MCF 10A (cell line): ENCODE measurements at regions of chr6 and their contacts with region 1.

Region 1: DNA sequence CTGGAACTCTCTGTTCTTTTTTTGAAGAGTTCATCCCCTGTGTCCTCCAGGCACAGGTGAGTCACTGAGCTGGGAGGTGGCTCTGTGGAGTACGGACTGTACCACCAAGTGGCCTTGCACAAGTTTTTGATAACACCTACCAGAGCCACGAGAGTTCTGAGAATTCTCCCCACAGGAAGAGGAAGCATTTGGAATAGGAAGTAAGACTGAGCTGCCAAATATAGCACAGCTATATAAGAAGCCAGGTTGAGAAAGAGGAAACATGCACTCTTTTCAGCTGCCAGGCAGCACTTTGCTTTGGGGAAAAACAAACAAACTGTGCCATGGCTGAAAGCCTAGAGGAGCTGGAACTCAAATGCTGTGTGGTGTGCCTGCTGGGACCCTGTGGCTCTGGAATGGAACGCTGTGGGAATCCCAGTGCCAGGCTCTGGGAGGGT is 70.8 kb upstream of the RIPOR2 start:
- DNase-seq: peak; percentile 97
- H3K4me3 Mint-ChIP-seq: peak overlapping the region; percentile 12
- H3K27ac Mint-ChIP-seq: peak overlapping the region; percentile 78
- H3K4me1 Mint-ChIP-seq: peaks cover 60% of the 10 kb centered on the region
- H3K27me3 Mint-ChIP-seq: no peaks in the 10 kb centered on the region
- CTCF ChIP-seq: no peak

Region 2: GRCh38 chr6:24855395-24856245 is 151.0 kb before region 1 on chr6:
- CTCF ChIA-PET with region 1: interaction called, 6 read pairs
- POLR2A ChIA-PET with region 1: interaction called, 159 read pairs
- intact Hi-C with region 1: no loop called
- DNase-seq: peak; percentile 76
- H3K4me3 Mint-ChIP-seq: no peak overlapping the region
- H3K27ac Mint-ChIP-seq: peak overlapping the region; percentile 39
- H3K4me1 Mint-ChIP-seq: peaks cover 28% of the 10 kb centered on the region
- H3K27me3 Mint-ChIP-seq: no peaks in the 10 kb centered on the region
- CTCF ChIP-seq: peak; percentile 84

Region 3: GRCh38 chr6:24864343-24864742 is 142.2 kb before region 1 on chr6:
- CTCF ChIA-PET with region 1: no interaction called
- POLR2A ChIA-PET with region 1: interaction called, 159 read pairs
- intact Hi-C with region 1: no loop called
- DNase-seq: no peak
- H3K4me3 Mint-ChIP-seq: no peak overlapping the region
- H3K27ac Mint-ChIP-seq: no peak overlapping the region
- H3K4me1 Mint-ChIP-seq: peaks cover 6% of the 10 kb centered on the region
- H3K27me3 Mint-ChIP-seq: no peaks in the 10 kb centered on the region
- CTCF ChIP-seq: no peak

Region 4: DNA sequence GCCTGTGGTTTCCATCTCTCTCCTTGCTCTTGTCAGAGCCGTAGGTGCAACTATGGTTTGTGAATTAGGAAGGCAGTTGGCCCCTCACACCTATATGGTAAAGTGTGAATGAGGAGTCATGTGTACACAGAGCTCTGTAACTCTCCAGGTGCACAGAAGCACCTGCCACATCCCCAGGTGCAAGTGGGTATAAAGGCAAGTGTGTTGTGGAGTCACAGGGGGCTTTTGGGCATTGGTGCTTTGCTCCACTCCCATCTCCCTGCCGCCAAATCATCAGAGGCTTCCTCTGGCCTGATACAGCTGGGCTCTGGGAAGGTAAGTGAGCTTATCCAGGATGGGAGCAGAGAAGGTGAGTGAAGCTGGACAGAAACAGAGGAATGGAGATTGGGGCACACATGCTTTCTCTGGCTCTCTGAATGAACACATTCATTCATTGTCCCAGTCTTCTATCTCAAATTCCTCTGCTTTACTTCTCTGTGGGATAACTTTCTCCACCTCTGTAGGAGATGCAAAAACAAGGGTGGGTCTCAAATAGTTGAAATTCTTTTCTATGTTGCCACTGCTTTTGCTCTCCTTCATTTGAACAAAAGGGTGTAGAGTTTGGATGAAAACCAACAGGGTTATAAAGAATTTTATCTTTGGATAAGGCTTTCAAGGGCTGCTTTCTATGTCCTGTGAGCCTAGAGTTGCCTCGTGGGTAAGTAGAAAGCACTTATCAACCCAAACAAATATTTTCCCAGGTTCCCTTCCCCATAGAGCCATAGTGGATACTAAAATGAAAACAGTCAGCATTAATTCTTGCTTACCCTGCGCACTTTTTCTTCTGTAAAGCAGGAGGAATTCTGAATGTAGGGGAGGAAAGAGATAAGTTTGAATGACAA is 25.8 kb before region 1 on chr6:
- CTCF ChIA-PET with region 1: interaction called, 6 read pairs
- POLR2A ChIA-PET with region 1: interaction called, 20 read pairs
- intact Hi-C with region 1: no loop called
- DNase-seq: no peak
- H3K4me3 Mint-ChIP-seq: no peak overlapping the region
- H3K27ac Mint-ChIP-seq: peak overlapping the region; percentile 60
- H3K4me1 Mint-ChIP-seq: peaks cover 34% of the 10 kb centered on the region
- H3K27me3 Mint-ChIP-seq: no peaks in the 10 kb centered on the region
- CTCF ChIP-seq: no peak

Region 5: DNA sequence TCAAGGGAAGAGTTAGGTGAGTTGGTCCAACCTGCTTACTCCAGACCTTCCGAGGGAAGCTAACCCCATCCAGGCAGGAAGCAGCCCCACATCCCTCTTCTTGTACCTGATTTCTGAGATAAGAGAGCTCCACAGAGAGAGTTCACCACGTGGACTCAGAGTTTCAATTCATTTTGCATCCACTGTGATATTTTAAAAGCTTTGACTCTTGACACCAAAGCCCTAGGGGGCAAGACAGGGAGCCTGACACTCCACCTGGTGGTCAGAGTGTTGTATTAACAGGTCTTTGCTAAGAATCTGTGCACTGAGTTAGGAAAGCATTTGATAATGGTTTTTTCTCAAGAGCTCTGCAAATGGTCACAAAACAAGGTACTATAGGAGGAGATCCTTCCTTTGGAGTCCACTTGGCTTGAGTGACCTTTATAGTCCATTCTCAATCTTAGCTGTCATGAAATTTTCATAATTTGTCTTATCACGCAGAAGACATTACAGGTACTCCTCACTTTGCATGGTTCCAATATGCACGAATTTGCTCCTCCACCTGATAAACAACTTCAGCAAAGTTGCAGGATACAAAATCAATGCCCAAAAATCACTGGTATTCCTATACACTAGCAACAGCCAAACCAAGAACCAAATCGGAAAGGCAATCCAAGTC is 14.6 kb before region 1 on chr6:
- CTCF ChIA-PET with region 1: interaction called, 28 read pairs
- POLR2A ChIA-PET with region 1: interaction called, 27 read pairs
- intact Hi-C with region 1: no loop called
- DNase-seq: peak; percentile 76
- H3K4me3 Mint-ChIP-seq: no peak overlapping the region
- H3K27ac Mint-ChIP-seq: no peak overlapping the region
- H3K4me1 Mint-ChIP-seq: peaks cover 19% of the 10 kb centered on the region
- H3K27me3 Mint-ChIP-seq: no peaks in the 10 kb centered on the region
- CTCF ChIP-seq: peak; percentile 37

Region 6: GRCh38 chr6:25027221-25027916 is 20.8 kb after region 1 on chr6:
- CTCF ChIA-PET with region 1: no interaction called
- POLR2A ChIA-PET with region 1: interaction called, 13 read pairs
- intact Hi-C with region 1: no loop called
- DNase-seq: no peak
- H3K4me3 Mint-ChIP-seq: no peak overlapping the region
- H3K27ac Mint-ChIP-seq: no peak overlapping the region
- H3K4me1 Mint-ChIP-seq: peaks cover 15% of the 10 kb centered on the region
- H3K27me3 Mint-ChIP-seq: no peaks in the 10 kb centered on the region
- CTCF ChIP-seq: no peak